PC-3 (cell line): ENCODE measurements at regions of chr13 and their contacts with region 1.

Region 1: GRCh38 chr13:75258159-75258782 is 223.7 kb downstream of the TBC1D4 start:
- DNase-seq: peak; percentile 73
- ATAC-seq: peak; percentile 74
- H3K4me3 ChIP-seq: no peak overlapping the region
- H3K27ac ChIP-seq: no peak overlapping the region
- H3K4me1 ChIP-seq: peaks cover 15% of the 10 kb centered on the region
- H3K27me3 ChIP-seq: no peaks in the 10 kb centered on the region
- CTCF ChIP-seq: peak; percentile 75

Region 2: DNA sequence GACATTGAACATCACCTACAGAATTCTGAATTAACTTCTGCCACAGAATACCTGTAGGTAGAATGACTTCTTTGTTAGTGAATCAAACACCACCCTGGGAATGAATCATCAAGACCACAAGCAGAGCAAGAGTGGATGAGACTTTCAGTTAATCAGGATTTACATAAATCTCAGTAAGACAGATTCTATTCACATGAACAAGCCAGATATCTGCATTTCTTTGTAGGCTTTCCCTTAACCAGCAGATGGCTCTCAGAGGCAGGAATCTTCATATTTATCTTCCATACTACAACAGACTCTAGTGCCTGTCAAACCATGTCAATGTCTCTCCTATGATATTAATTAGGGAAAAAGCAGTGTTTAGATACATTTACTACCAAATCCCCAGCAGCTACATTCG is 1536.2 kb before region 1 on chr13:
- CTCF ChIA-PET with region 1: no interaction called
- POLR2A ChIA-PET with region 1: no interaction called
- intact Hi-C with region 1: loop called (anchors 1 kb)
- DNase-seq: peak; percentile 82
- ATAC-seq: peak; percentile 94
- H3K4me3 ChIP-seq: no peak overlapping the region
- H3K27ac ChIP-seq: peak overlapping the region; percentile 56
- H3K4me1 ChIP-seq: peaks cover 21% of the 10 kb centered on the region
- H3K27me3 ChIP-seq: no peaks in the 10 kb centered on the region
- CTCF ChIP-seq: peak; percentile 61

Region 3: GRCh38 chr13:73835138-73835721 is 1423.0 kb before region 1 on chr13:
- CTCF ChIA-PET with region 1: no interaction called
- POLR2A ChIA-PET with region 1: no interaction called
- intact Hi-C with region 1: loop called (anchors 5 kb)
- DNase-seq: peak; percentile 67
- ATAC-seq: peak; percentile 27; the same call in 1 of the 2 replicates
- H3K4me3 ChIP-seq: no peak overlapping the region
- H3K27ac ChIP-seq: no peak overlapping the region
- H3K4me1 ChIP-seq: peaks cover 22% of the 10 kb centered on the region
- H3K27me3 ChIP-seq: no peaks in the 10 kb centered on the region
- CTCF ChIP-seq: peak; percentile 68

Region 4: DNA sequence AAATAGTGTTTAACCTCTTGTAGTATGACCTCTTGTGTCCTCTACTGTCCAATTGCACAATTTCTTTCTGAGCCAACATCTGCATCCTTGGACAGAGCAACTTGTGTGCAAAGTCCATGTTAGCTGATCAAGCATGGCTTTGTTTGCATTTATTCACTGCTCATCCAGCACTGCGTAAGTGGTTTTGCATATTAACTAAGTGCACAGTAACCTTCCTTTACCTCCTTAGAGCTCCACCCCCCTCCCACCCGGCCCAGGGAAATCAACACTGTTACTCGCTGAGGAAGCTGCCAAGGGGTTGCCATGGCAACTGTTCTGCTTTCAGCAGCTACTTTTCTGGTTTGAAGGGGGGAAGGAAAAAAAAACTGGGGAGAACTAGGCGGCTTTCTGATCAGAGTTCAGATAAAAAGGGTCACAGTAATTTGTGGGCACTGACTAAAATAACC is 970.5 kb before region 1 on chr13:
- CTCF ChIA-PET with region 1: interaction called, 4 read pairs
- POLR2A ChIA-PET with region 1: no interaction called
- intact Hi-C with region 1: loop called (anchors 1 kb)
- DNase-seq: peak; percentile 40
- ATAC-seq: peak; percentile 23
- H3K4me3 ChIP-seq: no peak overlapping the region
- H3K27ac ChIP-seq: no peak overlapping the region
- H3K4me1 ChIP-seq: peaks cover 22% of the 10 kb centered on the region
- H3K27me3 ChIP-seq: no peaks in the 10 kb centered on the region
- CTCF ChIP-seq: no peak

Region 5: DNA sequence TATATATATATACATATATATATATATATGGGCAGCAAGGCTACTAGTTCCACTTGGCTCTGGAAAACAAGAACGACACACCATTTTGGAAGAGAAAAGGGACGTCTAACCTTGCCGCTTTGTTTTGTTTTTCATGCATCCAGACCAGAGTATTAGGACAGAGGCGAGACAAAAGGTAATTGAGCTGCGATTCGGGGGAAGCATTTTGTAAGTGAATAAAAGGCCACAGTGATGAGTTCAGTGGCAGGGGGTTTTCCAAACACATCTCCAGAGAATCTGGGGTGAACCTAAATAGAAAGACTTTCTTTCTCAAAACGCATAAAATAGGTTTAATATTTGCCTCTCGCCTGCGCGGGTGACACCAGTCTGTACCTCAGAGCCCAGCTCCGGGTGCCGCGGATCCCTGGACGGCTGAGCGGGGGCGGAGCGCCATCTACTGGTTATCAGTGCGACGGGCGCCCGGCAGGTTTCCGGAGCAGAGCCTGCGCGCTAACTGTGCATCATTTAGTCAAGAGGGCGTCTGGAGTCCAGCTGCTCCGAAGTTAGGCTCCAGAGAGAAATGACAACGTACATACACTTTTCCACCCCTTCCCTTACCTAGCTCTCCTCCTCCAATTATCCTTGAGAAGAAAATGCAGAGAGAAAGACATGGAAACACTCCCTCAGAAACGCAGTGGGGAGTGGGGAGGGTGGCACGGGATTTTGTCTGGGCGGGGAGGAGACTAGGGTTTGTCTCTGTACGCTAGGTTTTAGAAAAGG is 38.6 kb before region 1 on chr13:
- CTCF ChIA-PET with region 1: no interaction called
- POLR2A ChIA-PET with region 1: no interaction called
- intact Hi-C with region 1: loop called (anchors 5 kb)
- DNase-seq: peak; percentile 72
- ATAC-seq: peak; percentile 98
- H3K4me3 ChIP-seq: peak overlapping the region; percentile 64
- H3K27ac ChIP-seq: no peak overlapping the region
- H3K4me1 ChIP-seq: peaks cover 11% of the 10 kb centered on the region; the same call in 1 of the 2 replicates
- H3K27me3 ChIP-seq: no peaks in the 10 kb centered on the region
- CTCF ChIP-seq: peak; percentile 89